ENCODE measurements at regions of chr17 and their contacts with region 1.

Region 1: GRCh38 chr17:80599546-80600305 is 55.1 kb downstream of the RPTOR start:
- DNase-seq: no peak
- ATAC-seq: peak in 4 of 8 donors; percentile 12 to 47 (median 37)
- H3K4me3 ChIP-seq: no peak overlapping the region
- H3K27ac ChIP-seq: peak overlapping the region in 1 of 10 donors; percentile 40
- H3K4me1 ChIP-seq: peaks cover 6 to 41% (median 18%) of the 10 kb centered on the region in 9 donors
- H3K27me3 ChIP-seq: no peaks in the 10 kb centered on the region
- CTCF ChIP-seq: no peak

Region 2: DNA sequence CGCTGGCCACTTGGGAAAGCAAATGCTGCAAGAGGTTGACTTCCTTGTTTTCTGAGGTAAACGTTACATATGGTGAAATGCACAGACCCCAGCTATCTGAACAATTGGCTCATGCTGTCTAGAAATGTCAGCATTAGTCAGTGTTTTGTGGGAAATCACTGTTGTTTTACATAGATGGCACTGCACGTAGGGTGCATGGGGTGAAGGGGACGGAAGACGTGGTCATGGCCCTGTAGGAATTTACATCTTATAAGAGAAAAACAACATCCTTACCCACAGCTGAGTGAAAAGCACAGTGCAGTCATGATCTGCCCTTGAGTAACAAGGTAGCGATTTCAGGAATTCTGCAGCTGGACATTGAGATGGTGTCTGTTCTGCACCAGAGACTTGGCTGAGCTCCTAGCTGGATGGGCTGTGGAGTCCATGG is 39.9 kb before region 1 on chr17:
- intact Hi-C with region 1: loop called in 1 of 10 experiments (anchors 2 kb)
- DNase-seq: no peak
- ATAC-seq: peak in 3 of 8 donors; percentile 37 to 40 (median 39)
- H3K4me3 ChIP-seq: no peak overlapping the region
- H3K27ac ChIP-seq: no peak overlapping the region
- H3K4me1 ChIP-seq: peaks cover 0 to 17% (median 3%) of the 10 kb centered on the region in 9 donors
- H3K27me3 ChIP-seq: no peaks in the 10 kb centered on the region
- CTCF ChIP-seq: no peak

Region 3: GRCh38 chr17:80805032-80805751 is 205.5 kb after region 1 on chr17:
- intact Hi-C with region 1: no loop called
- DNase-seq: no peak
- ATAC-seq: no peak
- H3K4me3 ChIP-seq: no peak overlapping the region
- H3K27ac ChIP-seq: no peak overlapping the region
- H3K4me1 ChIP-seq: no peaks in the 10 kb centered on the region
- H3K27me3 ChIP-seq: no peaks in the 10 kb centered on the region
- CTCF ChIP-seq: no peak

Measured in heart right ventricle (tissue), 16 donors.